Mammary epithelial cell (primary cell): ENCODE measurements at regions of chr7 and their contacts with region 1.

Region 1: DNA sequence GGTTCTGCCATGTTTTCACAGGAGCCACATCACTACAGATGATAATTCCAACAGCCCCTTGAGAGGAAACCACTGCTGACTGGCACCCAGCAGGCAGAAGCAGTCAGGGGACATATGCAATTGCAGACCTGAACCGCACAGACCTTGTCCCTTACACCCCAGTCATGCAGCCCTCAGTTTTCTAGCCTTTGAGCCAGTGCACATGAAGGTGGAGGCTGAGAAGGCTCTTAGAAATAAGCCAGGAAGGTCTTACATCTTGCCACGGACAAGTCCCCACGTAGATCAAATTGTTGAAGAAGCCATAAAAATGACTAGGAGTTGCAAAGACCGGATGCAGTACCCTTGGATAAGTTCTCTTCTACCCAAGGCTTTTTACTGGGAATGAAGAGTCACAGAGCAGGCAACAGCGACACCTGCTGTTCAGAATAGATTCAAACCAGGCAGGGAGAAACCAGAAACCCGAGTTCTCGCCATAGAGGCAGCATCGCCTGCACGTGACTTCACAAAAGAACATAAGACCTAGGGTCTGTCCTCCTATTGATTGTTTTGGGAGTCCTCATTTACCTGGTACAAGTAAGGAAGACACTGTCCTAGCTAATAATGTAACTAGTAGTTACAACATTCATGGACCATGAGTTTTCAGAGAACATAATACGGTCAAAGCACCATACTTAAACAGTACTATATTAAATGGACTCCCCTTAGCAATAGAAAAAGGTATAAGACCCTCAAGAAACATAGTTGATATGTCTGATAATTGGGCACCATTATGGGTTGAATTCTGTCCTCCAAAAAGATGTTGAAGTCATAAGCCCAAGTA is 11.1 kb downstream of the STEAP1B start:
- DNase-seq: peak; percentile 54
- H3K4me3 ChIP-seq: no peak overlapping the region
- H3K27ac ChIP-seq: no peak overlapping the region
- H3K4me1 ChIP-seq: no peaks in the 10 kb centered on the region
- H3K27me3 ChIP-seq: no peaks in the 10 kb centered on the region
- CTCF ChIP-seq: peak; percentile 79 to 88

Region 2: GRCh38 chr7:22103255-22103969 is 385.4 kb before region 1 on chr7:
- CTCF ChIA-PET with region 1: interaction called, 8 read pairs
- dilution Hi-C with region 1: no loop called
- in situ Hi-C with region 1: loop called (anchors 5 kb)
- intact Hi-C with region 1: loop called (anchors 2 kb)
- DNase-seq: peak; percentile 87
- H3K4me3 ChIP-seq: no peak overlapping the region
- H3K27ac ChIP-seq: no peak overlapping the region
- H3K4me1 ChIP-seq: no peaks in the 10 kb centered on the region
- H3K27me3 ChIP-seq: no peaks in the 10 kb centered on the region
- CTCF ChIP-seq: peak; percentile 62 to 81

Region 3: DNA sequence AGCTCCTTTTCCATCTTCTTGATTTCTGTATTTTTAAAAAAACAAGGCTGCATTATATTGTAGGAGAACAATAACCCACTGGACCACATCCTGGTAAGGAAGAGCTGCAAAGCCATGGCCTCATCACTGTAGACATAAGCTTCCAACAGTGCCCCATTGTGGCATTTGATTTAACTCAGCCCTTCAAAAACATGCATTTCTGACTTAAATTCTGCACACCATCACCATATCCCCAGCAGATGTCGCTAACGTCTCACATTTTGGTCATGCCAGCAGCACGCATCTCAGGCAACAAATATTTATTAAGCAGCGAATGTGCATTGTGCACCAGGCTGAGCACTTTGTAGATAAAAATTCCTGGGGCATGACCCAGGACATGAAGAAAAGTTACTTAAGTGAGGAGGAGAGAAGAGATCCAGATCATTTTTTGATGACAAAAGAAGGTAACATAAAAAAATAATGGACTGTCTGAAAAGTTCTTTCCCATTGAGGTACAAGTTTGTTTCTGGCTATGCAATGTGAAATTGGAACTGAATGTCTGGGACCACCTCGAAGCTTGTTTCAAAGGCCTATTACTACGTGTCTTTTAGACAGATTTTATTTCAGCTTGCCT is 378.5 kb before region 1 on chr7:
- CTCF ChIA-PET with region 1: interaction called, 3 read pairs
- dilution Hi-C with region 1: no loop called
- in situ Hi-C with region 1: loop called (anchors 5 kb)
- intact Hi-C with region 1: loop called (anchors 1 kb)
- DNase-seq: peak; percentile 66
- H3K4me3 ChIP-seq: no peak overlapping the region
- H3K27ac ChIP-seq: no peak overlapping the region
- H3K4me1 ChIP-seq: no peaks in the 10 kb centered on the region
- H3K27me3 ChIP-seq: no peaks in the 10 kb centered on the region
- CTCF ChIP-seq: peak; percentile 79 to 86

Region 4: GRCh38 chr7:22295402-22296264 is 193.2 kb before region 1 on chr7:
- CTCF ChIA-PET with region 1: no interaction called
- dilution Hi-C with region 1: no loop called
- in situ Hi-C with region 1: no loop called
- intact Hi-C with region 1: loop called (anchors 1 kb)
- DNase-seq: peak; percentile 15
- H3K4me3 ChIP-seq: no peak overlapping the region
- H3K27ac ChIP-seq: no peak overlapping the region
- H3K4me1 ChIP-seq: no peaks in the 10 kb centered on the region
- H3K27me3 ChIP-seq: no peaks in the 10 kb centered on the region
- CTCF ChIP-seq: no peak

Region 5: DNA sequence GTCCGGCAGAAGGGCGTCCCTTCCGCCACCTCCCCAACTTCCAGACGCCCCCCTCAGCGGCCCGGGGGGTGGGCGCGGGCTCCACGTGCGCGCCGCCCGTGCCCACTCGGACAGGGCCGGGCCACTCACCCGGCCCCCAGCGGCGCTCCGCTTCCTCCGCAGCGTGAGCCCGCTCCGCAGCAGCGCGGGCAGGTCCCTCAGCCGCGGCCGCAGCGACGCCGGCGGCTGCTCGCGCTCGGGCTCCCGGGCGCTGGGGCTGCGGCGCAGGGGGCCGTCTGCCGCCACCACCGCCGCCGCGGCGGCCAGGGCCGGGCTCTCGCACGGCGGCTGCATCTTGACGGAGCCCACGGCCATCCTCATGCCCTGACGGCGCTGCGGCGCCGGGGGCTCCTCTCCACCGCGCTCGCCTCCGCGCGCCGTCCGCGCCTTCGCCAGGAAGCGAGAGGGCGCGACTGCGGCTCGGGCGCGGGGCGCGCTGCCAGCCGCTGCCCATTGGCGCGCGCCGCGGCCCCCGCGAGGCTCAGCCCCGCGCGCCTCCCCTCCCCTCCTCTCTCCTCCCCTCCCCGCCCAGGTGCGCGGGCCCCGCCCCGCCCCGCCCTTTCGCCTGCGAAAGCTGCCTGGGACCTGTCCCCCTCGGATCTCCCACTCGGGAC is 132.0 kb before region 1 on chr7 and contains the start of gene RAPGEF5:
- CTCF ChIA-PET with region 1: no interaction called
- dilution Hi-C with region 1: no loop called
- in situ Hi-C with region 1: no loop called
- intact Hi-C with region 1: loop called (anchors 5 kb)
- DNase-seq: peak; percentile 66
- H3K4me3 ChIP-seq: peak within 1 kb of the TSS; percentile 63 to 69 (median 66)
- H3K27ac ChIP-seq: peak within 1 kb of the TSS; percentile 76
- H3K4me1 ChIP-seq: peaks cover 20% of the 10 kb centered on the region
- H3K27me3 ChIP-seq: no peaks in the 10 kb centered on the region
- CTCF ChIP-seq: no peak
- total RNA-seq, gene RAPGEF5: 6.0 to 7.1 TPM